Activated naive CD4-positive, alpha-beta T cell treated with anti-CD3 and anti-CD28 coated beads for 36 hours (primary cell): ENCODE measurements at regions of chr2 and their contacts with region 1.

Region 1: DNA sequence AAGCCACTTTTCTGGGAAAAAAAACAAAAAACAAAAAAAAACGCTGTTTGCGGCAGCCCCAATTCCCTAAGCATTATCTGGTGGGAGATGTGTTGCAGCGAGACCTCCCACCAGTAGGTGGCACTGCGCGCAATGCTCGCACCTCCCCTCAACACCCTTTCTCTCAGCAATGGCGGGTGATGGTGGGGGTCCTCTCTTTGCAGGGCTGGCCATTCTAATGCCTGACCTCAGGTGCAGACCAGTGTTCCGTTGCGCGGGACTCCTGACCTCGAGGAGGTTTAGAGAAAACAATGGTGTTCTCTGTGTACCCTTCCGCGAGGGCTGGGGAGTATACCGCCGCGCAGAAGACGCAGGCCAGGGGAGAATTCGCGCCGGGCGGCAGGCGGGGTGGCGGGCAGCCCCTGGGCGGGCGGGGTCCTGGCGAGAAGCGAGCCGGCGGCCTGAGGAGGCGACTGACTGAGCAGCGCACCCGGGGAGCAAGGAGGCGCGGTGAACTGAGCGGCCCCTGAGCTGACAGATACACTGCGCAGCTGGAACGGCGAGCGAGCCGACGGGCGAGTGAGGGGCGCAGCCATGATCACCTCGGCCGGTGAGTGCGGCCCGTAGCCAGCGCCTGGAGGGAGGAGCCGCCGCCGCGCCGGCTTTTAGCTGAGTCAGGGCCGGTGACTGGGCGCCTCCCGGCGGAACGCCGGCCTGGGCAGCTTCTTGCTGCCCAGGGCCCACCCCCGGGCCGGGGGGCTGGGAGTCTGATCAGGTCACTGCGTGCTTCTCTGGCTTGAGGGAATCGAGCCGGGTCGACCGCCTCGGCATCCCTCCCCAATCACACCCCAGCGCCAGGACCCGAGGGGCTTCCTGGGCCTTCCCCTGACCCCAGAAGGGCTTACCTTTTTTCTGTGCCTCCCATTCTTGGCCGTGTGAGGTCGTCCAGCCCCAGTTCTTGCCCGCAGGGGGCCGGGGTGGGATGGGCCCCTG is at the start of gene PSMD1:
- DNase-seq: peak; percentile 96
- H3K4me3 Mint-ChIP-seq: peak within 1 kb of the TSS; percentile 97
- H3K27ac Mint-ChIP-seq: peak within 1 kb of the TSS; percentile 100
- H3K4me1 Mint-ChIP-seq: peaks cover 46% of the 10 kb centered on the region
- H3K27me3 Mint-ChIP-seq: peaks cover 2% of the 10 kb centered on the region
- total RNA-seq, gene PSMD1: 106 TPM

Region 2: DNA sequence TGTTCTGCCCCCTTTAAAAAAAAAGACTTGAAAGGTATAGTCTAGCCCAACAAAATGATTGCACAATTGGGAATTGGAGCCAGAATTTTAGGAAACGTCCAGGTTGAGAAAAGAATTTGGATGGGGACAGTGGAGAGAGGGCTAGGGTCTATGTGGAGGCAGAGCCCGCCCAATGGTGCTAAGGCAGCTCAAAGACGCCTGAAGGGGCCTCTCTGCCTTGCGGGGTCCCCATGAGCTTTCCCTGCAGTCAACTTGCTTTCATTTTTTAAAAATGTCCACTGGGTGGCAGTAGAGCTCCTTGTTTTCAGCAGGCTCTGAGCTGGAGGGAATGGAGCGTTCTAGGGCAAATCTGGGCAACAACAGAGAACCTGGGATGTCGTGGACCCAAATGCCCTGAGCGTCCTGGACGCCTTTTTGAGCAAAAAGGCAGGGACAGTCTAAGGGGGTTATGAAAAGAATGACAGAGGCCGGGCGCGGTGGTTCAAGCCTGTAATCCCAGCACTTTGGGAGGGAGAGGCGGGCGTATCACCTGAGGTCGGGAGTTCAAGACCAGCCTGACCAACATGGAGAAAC is 232.2 kb before region 1 on chr2:
- CTCF ChIA-PET with region 1: interaction called, 18 read pairs
- intact Hi-C with region 1: loop called (anchors 1 kb)
- DNase-seq: peak; percentile 59
- H3K4me3 Mint-ChIP-seq: no peak overlapping the region
- H3K27ac Mint-ChIP-seq: no peak overlapping the region
- H3K4me1 Mint-ChIP-seq: peaks cover 5% of the 10 kb centered on the region
- H3K27me3 Mint-ChIP-seq: peaks cover 27% of the 10 kb centered on the region

Region 3: GRCh38 chr2:230864598-230865306 is 192.0 kb before region 1 on chr2 and contains the start of gene ITM2C:
- CTCF ChIA-PET with region 1: interaction called, 4 read pairs
- intact Hi-C with region 1: loop called (anchors 2 kb)
- DNase-seq: peak; percentile 84
- H3K4me3 Mint-ChIP-seq: peak within 1 kb of the TSS; percentile 82
- H3K27ac Mint-ChIP-seq: peak within 1 kb of the TSS; percentile 3
- H3K4me1 Mint-ChIP-seq: peaks cover 45% of the 10 kb centered on the region
- H3K27me3 Mint-ChIP-seq: peaks cover 4% of the 10 kb centered on the region
- total RNA-seq, gene ITM2C: 13.0 to 13.6 TPM

Region 4: DNA sequence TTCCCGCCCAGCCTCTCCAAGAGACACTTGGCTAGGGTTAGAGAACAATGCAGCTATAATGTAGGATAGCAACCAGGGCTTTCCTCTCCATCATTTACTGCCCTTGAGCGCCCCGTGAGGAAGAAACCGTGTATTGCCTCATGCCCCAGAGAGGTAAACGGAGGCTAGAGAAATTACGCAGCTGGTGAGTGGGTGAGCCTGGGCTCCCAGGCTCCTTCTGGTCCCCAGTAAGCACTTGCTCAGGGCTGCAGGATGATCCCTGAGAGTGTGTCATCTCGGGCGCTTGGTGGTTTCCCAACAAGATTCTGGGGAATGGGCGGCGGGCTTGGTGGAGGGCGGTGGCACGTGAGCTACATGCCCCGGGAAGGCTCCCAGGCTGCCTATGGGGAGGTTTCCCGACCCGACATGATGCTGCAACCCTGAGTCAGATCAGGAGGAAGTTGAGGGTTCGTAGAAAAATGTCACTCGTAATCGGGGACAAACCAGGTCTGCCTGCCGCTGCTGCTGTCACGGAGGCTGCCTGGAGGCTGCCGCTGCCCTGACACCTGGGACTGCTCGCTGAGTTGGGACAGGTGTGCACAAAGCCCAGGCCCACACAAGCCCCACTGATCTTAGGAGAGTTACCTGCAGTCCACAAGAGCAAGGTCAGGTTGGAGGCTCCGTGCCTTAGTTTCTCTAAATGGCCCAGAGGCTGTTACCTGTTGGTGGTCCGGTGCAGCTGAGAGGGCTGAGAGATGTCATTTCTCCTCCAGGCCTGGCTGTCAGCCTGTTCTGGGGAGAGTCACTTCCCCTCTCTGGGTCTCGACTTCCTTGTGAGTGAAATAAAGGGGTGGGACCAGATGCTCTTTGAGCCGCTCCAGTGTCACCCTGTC is 132.0 kb before region 1 on chr2 and contains the start of gene GPR55:
- CTCF ChIA-PET with region 1: interaction called, 5 read pairs
- intact Hi-C with region 1: loop called (anchors 5 kb)
- DNase-seq: peak; percentile 83
- H3K4me3 Mint-ChIP-seq: peak within 1 kb of the TSS; percentile 60
- H3K27ac Mint-ChIP-seq: peak within 1 kb of the TSS; percentile 91
- H3K4me1 Mint-ChIP-seq: peaks cover 63% of the 10 kb centered on the region
- H3K27me3 Mint-ChIP-seq: peaks cover 2% of the 10 kb centered on the region
- total RNA-seq, gene GPR55: 0.35 to 0.43 TPM

Region 5: GRCh38 chr2:231227309-231228162 is 170.8 kb after region 1 on chr2:
- CTCF ChIA-PET with region 1: no interaction called
- intact Hi-C with region 1: no loop called
- DNase-seq: peak; percentile 73
- H3K4me3 Mint-ChIP-seq: no peak overlapping the region
- H3K27ac Mint-ChIP-seq: no peak overlapping the region
- H3K4me1 Mint-ChIP-seq: no peaks in the 10 kb centered on the region
- H3K27me3 Mint-ChIP-seq: no peaks in the 10 kb centered on the region

Region 6: GRCh38 chr2:231452799-231453508 is 396.2 kb after region 1 on chr2:
- CTCF ChIA-PET with region 1: no interaction called
- intact Hi-C with region 1: loop called (anchors 2 kb)
- DNase-seq: no peak
- H3K4me3 Mint-ChIP-seq: no peak overlapping the region
- H3K27ac Mint-ChIP-seq: peak overlapping the region; percentile 25
- H3K4me1 Mint-ChIP-seq: peaks cover 11% of the 10 kb centered on the region
- H3K27me3 Mint-ChIP-seq: no peaks in the 10 kb centered on the region

Region 7: DNA sequence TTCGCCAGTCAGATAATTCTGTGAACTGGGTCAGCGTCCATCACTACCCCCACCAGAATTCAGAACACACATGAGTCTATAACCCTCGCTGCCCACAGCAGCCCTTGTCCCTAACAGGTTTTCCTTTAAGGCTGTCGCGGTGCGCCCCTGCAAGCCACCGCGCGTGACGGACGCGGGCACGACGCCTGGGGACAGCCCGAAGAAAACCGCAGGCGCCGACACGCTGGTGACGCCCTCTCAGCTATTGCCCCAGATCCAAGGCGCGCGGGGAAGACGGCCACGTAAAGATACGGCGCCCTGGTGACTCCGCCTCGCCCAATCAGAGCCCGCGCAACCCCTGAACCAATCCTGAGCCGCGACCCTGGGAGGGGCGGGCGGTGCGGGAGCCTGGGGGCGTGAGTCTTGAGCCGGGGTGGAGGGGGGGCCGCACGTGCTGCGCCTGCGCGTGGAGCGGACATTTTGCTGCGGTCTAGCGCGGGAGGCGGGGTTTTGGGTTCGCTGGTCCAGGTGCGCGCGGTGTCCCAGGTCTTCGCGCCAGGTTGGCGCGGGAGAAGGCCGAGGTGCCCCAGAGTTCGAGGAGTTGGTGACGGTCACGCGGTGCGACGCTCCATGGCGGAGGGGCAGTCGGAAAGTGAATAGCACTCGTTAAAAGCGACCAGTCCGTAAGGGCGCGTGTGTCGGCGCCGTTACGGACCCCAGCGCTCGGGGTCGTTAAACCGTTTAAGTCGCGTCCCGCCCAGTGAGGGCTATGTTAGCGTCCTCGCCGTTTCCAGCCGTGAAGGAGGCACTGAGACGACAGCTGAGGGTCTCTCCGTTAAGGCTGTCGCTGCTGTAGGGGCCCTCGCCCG is 457.6 kb after region 1 on chr2:
- CTCF ChIA-PET with region 1: no interaction called
- intact Hi-C with region 1: loop called (anchors 1 kb)
- DNase-seq: peak; percentile 99
- H3K4me3 Mint-ChIP-seq: peak overlapping the region; percentile 95
- H3K27ac Mint-ChIP-seq: peak overlapping the region; percentile 92
- H3K4me1 Mint-ChIP-seq: peaks cover 13% of the 10 kb centered on the region
- H3K27me3 Mint-ChIP-seq: no peaks in the 10 kb centered on the region

Region 8: DNA sequence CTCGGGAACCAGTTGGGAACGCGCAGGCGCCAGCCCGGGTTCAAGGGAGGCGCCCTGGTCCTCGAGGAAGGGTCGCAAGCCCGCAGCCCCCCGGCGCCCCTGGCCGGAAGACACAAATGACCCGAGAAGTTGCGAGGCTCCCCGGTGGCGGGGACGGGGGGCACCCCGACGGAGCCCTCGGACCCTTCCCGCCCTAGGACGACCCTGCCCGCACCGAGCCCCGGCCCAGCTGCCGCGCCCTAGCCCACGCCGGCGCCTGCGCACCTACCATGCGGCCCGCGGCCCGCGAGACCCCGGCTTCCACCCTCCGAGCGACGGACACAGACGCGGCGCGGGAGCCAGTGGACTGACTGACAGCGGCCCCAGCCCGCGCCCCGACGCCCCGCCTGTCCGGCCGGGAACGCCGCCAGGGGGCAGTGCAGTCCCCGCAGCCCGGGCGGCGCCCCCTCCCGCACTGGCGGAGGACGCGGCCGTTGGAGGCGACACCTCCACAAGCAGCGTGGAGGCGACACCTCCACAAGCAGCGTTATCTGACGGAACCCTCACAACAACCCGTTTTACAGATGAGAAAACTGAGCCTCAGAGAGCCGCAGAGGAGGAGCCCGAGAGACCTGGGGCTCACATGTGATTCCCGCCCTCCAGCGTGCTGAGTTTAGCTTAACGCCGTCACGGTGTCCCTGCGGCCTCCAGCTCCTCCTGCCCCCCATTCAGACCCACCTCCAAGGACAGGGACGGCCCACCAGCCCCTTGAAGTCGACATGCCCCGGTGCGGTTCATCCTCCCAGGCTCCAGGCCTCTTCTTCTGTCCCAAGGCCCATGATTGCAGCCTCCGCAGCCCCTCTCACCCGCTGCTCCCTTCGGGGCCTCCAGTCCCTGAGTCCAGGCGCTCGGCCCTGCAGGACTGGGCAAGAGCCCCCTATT is 473.6 kb after region 1 on chr2 and contains the start of gene NMUR1:
- CTCF ChIA-PET with region 1: no interaction called
- intact Hi-C with region 1: no loop called
- DNase-seq: peak; percentile 59
- H3K4me3 Mint-ChIP-seq: peak within 1 kb of the TSS; percentile 3
- H3K27ac Mint-ChIP-seq: no peak within 1 kb of the TSS
- H3K4me1 Mint-ChIP-seq: peaks cover 5% of the 10 kb centered on the region
- H3K27me3 Mint-ChIP-seq: peaks cover 15% of the 10 kb centered on the region
- total RNA-seq, gene NMUR1: not detected